ENCODE measurements at regions of chr4 and their contacts with region 1.

Region 1: GRCh38 chr4:37603070-37603468 is 83.1 kb downstream of the RELL1 start:
- DNase-seq: peak; percentile 60
- H3K4me3 ChIP-seq: no peak overlapping the region
- H3K27ac ChIP-seq: no peak overlapping the region
- H3K4me1 ChIP-seq: no peaks in the 10 kb centered on the region
- CTCF ChIP-seq: peak; percentile 99

Region 2: GRCh38 chr4:37780444-37781150 is 177.5 kb after region 1 on chr4:
- CTCF ChIA-PET with region 1: no interaction called
- POLR2A ChIA-PET with region 1: interaction called, 3 read pairs
- intact Hi-C with region 1: loop called (anchors 1 kb)
- DNase-seq: peak; percentile 65
- H3K4me3 ChIP-seq: no peak overlapping the region
- H3K27ac ChIP-seq: no peak overlapping the region
- H3K4me1 ChIP-seq: peaks cover 10% of the 10 kb centered on the region
- CTCF ChIP-seq: peak; percentile 75

Region 3: GRCh38 chr4:38034986-38035882 is 432.2 kb after region 1 on chr4:
- CTCF ChIA-PET with region 1: no interaction called
- POLR2A ChIA-PET with region 1: no interaction called
- intact Hi-C with region 1: loop called (anchors 10 kb)
- DNase-seq: peak; percentile 84
- H3K4me3 ChIP-seq: no peak overlapping the region
- H3K27ac ChIP-seq: peak overlapping the region; percentile 19
- H3K4me1 ChIP-seq: peaks cover 14% of the 10 kb centered on the region
- CTCF ChIP-seq: peak; percentile 97